B cell (primary cell): ENCODE measurements at regions of chr15 and their contacts with region 1.

Region 1: GRCh38 chr15:45457641-45458433 is 64.7 kb downstream of the SLC30A4 start:
- DNase-seq: peak; percentile 92
- ATAC-seq: peak; percentile 73
- H3K4me3 ChIP-seq: peak overlapping the region; percentile 29 to 74 (median 49)
- H3K4me3 Mint-ChIP-seq: peak overlapping the region; percentile 84
- H3K27ac ChIP-seq: peak overlapping the region; percentile 52 to 62
- H3K27ac Mint-ChIP-seq: peak overlapping the region; percentile 72
- H3K4me1 ChIP-seq: peaks cover 34 to 37% of the 10 kb centered on the region in 2 donors
- H3K4me1 Mint-ChIP-seq: peaks cover 42% of the 10 kb centered on the region
- H3K27me3 ChIP-seq: no peaks in the 10 kb centered on the region
- H3K27me3 Mint-ChIP-seq: no peaks in the 10 kb centered on the region
- CTCF ChIP-seq: peak; percentile 94

Region 2: DNA sequence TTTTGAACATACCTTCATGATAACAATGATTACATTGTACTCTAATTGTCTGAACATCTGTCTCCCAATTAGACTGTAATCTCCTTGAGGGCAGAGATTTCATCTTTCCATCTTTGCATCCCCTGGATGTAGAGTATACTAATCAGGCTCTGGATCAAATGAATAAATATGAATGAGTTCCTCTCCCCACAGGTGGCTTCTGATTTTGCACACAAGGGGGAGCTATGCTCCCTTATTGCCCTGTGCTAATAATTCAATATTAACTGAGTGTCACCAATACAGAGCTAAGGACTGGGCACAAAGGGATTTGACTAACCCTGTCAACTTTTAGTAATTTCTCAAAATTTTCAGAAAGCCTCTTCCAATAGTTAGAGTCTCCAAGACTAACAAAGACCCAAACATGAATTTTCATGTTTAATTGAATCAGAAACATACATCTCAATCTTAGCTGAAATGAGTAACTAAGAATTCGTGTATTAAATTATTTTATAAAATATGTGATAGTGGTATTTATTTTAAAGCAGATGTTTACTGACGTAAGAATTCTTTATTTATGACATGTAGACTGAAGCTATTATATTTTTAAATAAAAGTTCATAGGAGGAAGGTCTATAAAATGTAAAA is 331.2 kb before region 1 on chr15:
- CTCF ChIA-PET with region 1: interaction called, 7 read pairs
- POLR2A ChIA-PET with region 1: no interaction called
- intact Hi-C with region 1: loop called (anchors 1 kb)
- DNase-seq: peak; percentile 70
- ATAC-seq: peak; percentile 59
- H3K4me3 ChIP-seq: no peak overlapping the region
- H3K4me3 Mint-ChIP-seq: no peak overlapping the region
- H3K27ac ChIP-seq: no peak overlapping the region
- H3K27ac Mint-ChIP-seq: no peak overlapping the region
- H3K4me1 ChIP-seq: peaks cover 15 to 22% of the 10 kb centered on the region in 2 donors
- H3K4me1 Mint-ChIP-seq: peaks cover 8% of the 10 kb centered on the region
- H3K27me3 ChIP-seq: peaks cover 0 to 55% (median 28%) of the 10 kb centered on the region in 4 experiments
- H3K27me3 Mint-ChIP-seq: peaks cover 60% of the 10 kb centered on the region
- CTCF ChIP-seq: peak; percentile 93

Region 3: DNA sequence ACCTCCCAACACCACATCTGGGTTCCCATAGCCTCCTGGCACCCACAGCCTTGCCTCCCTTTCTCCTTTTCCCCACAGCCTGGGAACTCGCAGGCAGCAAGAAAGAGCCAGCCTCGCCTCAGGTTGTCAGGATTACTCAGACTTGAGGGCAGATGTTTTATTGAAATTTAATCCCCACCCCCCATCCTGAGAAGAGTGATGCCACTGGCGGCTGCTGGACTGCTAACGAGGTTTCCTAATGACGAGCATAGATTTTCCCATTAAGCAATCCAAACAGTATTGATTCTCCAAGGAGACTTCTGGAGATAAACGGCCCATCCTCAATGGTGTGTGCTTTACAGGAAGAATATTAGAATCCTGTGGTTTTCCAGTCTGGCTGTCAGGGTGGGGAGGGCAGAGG is 283.8 kb before region 1 on chr15:
- CTCF ChIA-PET with region 1: no interaction called
- POLR2A ChIA-PET with region 1: no interaction called
- intact Hi-C with region 1: no loop called
- DNase-seq: no peak
- ATAC-seq: no peak
- H3K4me3 ChIP-seq: no peak overlapping the region
- H3K4me3 Mint-ChIP-seq: no peak overlapping the region
- H3K27ac ChIP-seq: no peak overlapping the region
- H3K27ac Mint-ChIP-seq: no peak overlapping the region
- H3K4me1 ChIP-seq: peaks cover 0 to 11% of the 10 kb centered on the region in 2 donors
- H3K4me1 Mint-ChIP-seq: peaks cover 9% of the 10 kb centered on the region
- H3K27me3 ChIP-seq: no peaks in the 10 kb centered on the region
- H3K27me3 Mint-ChIP-seq: no peaks in the 10 kb centered on the region
- CTCF ChIP-seq: no peak

Region 4: DNA sequence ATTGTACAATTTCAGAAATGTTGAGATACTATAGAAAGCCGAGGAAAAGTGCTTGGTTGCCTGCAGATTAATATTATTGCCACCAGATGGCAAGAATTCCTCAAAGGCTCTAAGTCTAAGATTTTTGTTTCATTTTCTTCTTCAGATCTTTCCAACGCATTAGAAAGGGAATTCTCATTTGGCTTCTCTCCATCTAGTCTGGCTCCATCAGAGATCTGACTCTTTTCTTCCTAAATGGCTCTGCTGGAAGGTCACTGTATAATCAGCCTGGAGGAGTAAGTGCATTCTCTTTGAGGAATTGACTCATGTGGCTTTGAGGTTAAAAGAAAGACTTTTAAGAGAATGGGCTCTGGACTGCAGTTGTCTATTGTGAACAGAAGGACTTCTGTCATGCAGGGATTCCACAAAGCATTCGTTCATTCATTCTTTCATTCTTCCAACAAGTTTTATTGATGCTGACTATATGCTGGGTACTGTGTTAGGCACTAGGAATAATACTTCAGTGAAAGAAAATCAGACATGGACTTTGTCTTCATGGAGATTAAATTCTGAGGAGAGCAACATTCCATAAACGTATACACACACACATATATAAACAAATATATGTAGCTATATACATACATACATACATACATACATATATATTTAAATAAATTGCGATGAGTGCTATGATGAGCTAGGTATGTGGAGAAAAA is 150.5 kb before region 1 on chr15:
- CTCF ChIA-PET with region 1: interaction called, 9 read pairs
- POLR2A ChIA-PET with region 1: no interaction called
- intact Hi-C with region 1: loop called (anchors 1 kb)
- DNase-seq: peak; percentile 58
- ATAC-seq: peak; percentile 51
- H3K4me3 ChIP-seq: peak overlapping the region in 3 of 5 experiments; percentile 33 to 49 (median 41)
- H3K4me3 Mint-ChIP-seq: peak overlapping the region; percentile 71
- H3K27ac ChIP-seq: no peak overlapping the region
- H3K27ac Mint-ChIP-seq: no peak overlapping the region
- H3K4me1 ChIP-seq: peaks cover 0 to 3% of the 10 kb centered on the region in 2 donors
- H3K4me1 Mint-ChIP-seq: peaks cover 4% of the 10 kb centered on the region
- H3K27me3 ChIP-seq: peaks cover 0 to 14% (median 7%) of the 10 kb centered on the region in 4 experiments
- H3K27me3 Mint-ChIP-seq: peaks cover 29% of the 10 kb centered on the region
- CTCF ChIP-seq: peak; percentile 69

Region 5: DNA sequence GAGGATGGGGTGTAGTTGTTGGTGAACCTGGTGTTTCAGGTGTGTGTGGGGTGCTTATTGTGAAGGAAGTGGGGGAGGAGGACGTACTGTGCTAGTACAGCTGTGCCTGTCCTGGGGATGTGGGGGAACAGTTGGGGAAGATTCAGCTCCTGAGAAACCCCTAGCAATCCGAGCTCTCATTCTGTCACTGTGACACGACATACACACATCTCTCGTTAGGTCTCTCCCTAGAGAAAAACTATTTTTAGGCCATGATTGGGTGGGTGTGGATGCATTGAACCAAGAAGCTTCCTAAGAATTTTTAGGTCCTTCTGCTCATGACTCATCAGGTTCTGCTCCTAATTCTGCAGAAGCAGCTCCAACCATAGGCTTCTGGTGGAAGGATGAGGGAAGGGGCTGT is 10.5 kb after region 1 on chr15:
- CTCF ChIA-PET with region 1: interaction called, 14 read pairs
- POLR2A ChIA-PET with region 1: no interaction called
- intact Hi-C with region 1: no loop called
- DNase-seq: no peak
- ATAC-seq: no peak
- H3K4me3 ChIP-seq: no peak overlapping the region
- H3K4me3 Mint-ChIP-seq: no peak overlapping the region
- H3K27ac ChIP-seq: no peak overlapping the region
- H3K27ac Mint-ChIP-seq: no peak overlapping the region
- H3K4me1 ChIP-seq: no peaks in the 10 kb centered on the region
- H3K4me1 Mint-ChIP-seq: no peaks in the 10 kb centered on the region
- H3K27me3 ChIP-seq: peaks cover 0 to 8% (median 0%) of the 10 kb centered on the region in 4 experiments
- H3K27me3 Mint-ChIP-seq: peaks cover 17% of the 10 kb centered on the region
- CTCF ChIP-seq: no peak

Region 6: GRCh38 chr15:45603881-45604280 is 146.0 kb after region 1 on chr15:
- CTCF ChIA-PET with region 1: interaction called, 16 read pairs
- POLR2A ChIA-PET with region 1: no interaction called
- intact Hi-C with region 1: no loop called
- DNase-seq: peak; percentile 51
- ATAC-seq: peak; percentile 58
- H3K4me3 ChIP-seq: no peak overlapping the region
- H3K4me3 Mint-ChIP-seq: peak overlapping the region; percentile 5
- H3K27ac ChIP-seq: peak overlapping the region; percentile 55 to 62
- H3K27ac Mint-ChIP-seq: peak overlapping the region; percentile 64
- H3K4me1 ChIP-seq: peaks cover 31 to 40% of the 10 kb centered on the region in 2 donors
- H3K4me1 Mint-ChIP-seq: peaks cover 43% of the 10 kb centered on the region
- H3K27me3 ChIP-seq: no peaks in the 10 kb centered on the region
- H3K27me3 Mint-ChIP-seq: no peaks in the 10 kb centered on the region
- CTCF ChIP-seq: no peak